Activated CD4-positive, alpha-beta T cell treated with anti-CD3 and anti-CD28 coated beads for 36 hours (primary cell): ENCODE measurements at regions of chr12 and their contacts with region 1.

Region 1: GRCh38 chr12:70242695-70243509 is at the start of gene CNOT2:
- DNase-seq: peak; percentile 95
- ATAC-seq: peak; percentile 83
- H3K4me3 Mint-ChIP-seq: peak within 1 kb of the TSS; percentile 94
- H3K27ac Mint-ChIP-seq: peak within 1 kb of the TSS; percentile 100
- H3K4me1 Mint-ChIP-seq: peaks cover 57% of the 10 kb centered on the region
- H3K27me3 Mint-ChIP-seq: no peaks in the 10 kb centered on the region
- total RNA-seq, gene CNOT2: 63.3 to 77.7 TPM

Region 2: DNA sequence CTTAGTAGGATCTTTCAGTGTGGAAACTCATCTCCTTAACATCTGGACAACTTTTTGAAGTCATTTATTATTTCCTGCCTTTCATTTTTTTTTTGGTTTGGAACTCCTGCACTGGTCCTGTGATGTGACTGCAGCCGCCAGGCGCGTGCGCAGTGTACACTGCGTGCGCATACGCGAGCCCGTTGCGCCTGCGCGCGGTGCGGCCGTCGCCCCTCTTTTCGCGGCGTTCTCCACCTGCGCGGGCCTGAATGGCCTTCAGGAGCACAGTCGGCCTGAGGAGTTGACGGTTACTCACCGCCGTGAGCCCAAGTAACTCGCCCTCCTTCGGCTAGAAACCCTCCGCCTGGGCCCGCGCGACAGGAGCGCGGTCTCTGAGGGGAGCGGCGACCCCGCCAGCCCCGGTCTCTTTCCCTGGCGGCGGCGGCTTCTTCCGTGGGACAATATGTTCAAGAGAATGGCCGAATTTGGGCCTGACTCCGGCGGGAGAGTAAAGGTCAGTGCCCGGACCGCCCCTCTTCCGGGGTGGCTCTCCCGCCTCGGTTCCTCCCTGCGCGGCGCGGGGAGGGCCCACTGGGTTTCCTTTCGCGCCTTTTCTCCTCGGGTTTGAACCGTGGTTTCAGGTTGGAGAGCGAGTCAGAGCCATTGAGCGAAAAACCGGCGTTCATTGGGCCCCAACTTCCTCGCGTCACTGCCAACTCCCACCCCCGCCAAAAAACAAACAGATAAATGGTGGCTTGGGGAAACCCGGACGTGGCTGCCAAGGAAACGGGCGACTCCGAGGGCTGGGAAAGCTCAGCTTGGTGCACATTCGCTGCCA is 883.2 kb before region 1 on chr12 and contains the start of gene YEATS4:
- CTCF ChIA-PET with region 1: no interaction called
- POLR2A ChIA-PET with region 1: no interaction called
- intact Hi-C with region 1: loop called in 1 of 2 experiments (anchors 1 kb)
- DNase-seq: peak; percentile 92
- ATAC-seq: peak; percentile 83
- H3K4me3 Mint-ChIP-seq: peak within 1 kb of the TSS; percentile 91
- H3K27ac Mint-ChIP-seq: peak within 1 kb of the TSS; percentile 97
- H3K4me1 Mint-ChIP-seq: peaks cover 29% of the 10 kb centered on the region
- H3K27me3 Mint-ChIP-seq: peaks cover 1% of the 10 kb centered on the region
- total RNA-seq, gene YEATS4: 55.4 to 59.8 TPM

Region 3: DNA sequence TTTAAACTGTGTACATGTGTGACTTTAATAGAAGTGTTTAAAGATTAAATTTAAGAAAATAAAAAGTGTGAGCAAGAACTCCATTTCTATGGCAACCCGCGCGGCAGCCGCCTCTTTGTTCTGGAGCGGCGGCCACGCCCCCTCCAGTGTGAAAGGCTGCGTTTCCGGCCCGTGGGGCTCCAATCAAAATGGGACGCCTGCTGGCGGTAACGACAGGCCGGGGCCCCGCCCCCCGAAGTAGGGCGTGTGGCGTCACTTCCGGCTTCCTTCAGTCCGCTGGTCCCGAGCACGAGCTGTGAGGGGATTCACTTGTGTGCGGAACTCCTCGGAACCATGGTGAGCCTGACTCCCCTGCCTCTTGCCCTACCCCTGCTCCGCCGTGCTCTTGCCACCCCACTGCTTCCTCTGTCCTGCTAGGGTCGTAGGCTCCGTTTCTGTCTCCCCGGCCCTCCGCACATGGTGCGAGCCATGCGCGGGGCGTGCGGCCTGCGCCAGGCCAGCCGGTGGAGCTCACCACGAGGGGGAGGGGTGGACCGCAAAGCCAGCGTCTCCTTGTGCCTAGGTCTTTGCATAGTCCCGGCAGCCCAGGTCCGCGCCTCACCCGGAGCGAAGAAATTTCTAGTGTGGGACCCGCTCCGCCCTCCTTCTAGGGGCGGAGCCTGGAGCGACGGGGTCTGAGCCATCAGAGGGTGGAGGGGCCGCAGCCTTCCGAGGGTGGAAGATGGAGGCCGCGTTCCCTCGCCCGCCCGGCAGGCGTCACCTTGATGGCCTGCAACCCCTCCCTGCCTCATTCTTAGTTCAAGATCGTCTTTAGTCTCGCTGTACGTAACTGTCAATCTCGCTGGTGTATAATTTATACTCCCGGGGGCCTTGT is 657.5 kb before region 1 on chr12 and contains the start of gene CCT2:
- CTCF ChIA-PET with region 1: no interaction called
- POLR2A ChIA-PET with region 1: no interaction called
- intact Hi-C with region 1: loop called (anchors 5 kb)
- DNase-seq: peak; percentile 98
- ATAC-seq: peak; percentile 94
- H3K4me3 Mint-ChIP-seq: peak within 1 kb of the TSS; percentile 96
- H3K27ac Mint-ChIP-seq: peak within 1 kb of the TSS; percentile 95
- H3K4me1 Mint-ChIP-seq: peaks cover 30% of the 10 kb centered on the region
- H3K27me3 Mint-ChIP-seq: no peaks in the 10 kb centered on the region
- total RNA-seq, gene CCT2: 293 to 360 TPM

Region 4: DNA sequence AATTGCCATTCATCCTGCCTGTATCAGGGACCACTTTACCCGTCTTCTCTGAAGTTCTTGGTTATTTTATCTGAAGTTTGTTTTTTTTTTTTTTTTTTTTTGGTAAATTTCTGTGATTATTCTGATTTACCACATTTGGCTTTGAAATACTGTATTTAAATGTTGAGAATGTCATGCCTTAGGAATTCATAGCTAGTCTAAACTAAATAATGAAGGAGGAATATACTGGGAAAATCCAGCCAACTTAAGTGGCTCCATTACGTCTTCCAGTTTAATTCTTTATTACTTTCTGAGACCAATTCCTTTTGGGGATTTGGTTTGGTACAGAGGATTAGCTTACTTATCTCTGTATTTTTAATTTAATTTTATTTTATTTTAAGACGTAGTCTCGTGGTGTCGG is 62.9 kb after region 1 on chr12:
- CTCF ChIA-PET with region 1: no interaction called
- POLR2A ChIA-PET with region 1: no interaction called
- intact Hi-C with region 1: loop called in 1 of 2 experiments (anchors 5 kb)
- DNase-seq: no peak
- ATAC-seq: no peak
- H3K4me3 Mint-ChIP-seq: no peak overlapping the region
- H3K27ac Mint-ChIP-seq: no peak overlapping the region
- H3K4me1 Mint-ChIP-seq: peaks cover 51% of the 10 kb centered on the region
- H3K27me3 Mint-ChIP-seq: no peaks in the 10 kb centered on the region

Region 5: DNA sequence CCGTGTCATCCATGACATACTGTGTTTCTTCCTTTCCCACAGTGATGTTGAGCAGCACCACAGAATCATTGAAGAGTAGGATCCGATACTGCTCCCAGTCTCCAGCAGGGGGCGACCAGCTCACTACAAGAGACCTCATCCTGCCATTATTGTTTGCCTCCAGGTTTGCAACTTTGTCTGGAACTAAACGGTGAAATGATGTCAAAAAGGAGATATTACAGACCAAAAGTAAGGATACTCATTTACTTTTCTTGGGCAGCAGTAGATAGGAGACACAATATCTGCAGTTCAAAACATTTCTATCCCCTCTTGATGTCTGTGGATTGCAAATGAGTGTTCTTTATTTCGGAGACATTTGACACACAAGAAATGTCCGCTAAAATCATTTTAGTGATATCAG is 347.1 kb after region 1 on chr12:
- CTCF ChIA-PET with region 1: no interaction called
- POLR2A ChIA-PET with region 1: no interaction called
- intact Hi-C with region 1: no loop called
- DNase-seq: peak; percentile 80
- ATAC-seq: peak; percentile 74
- H3K4me3 Mint-ChIP-seq: no peak overlapping the region
- H3K27ac Mint-ChIP-seq: no peak overlapping the region
- H3K4me1 Mint-ChIP-seq: no peaks in the 10 kb centered on the region
- H3K27me3 Mint-ChIP-seq: peaks cover 22% of the 10 kb centered on the region

Region 6: GRCh38 chr12:71663561-71664294 is 1420.8 kb after region 1 on chr12 and contains the start of gene ZFC3H1:
- CTCF ChIA-PET with region 1: no interaction called
- POLR2A ChIA-PET with region 1: no interaction called
- intact Hi-C with region 1: loop called (anchors 1 to 5 kb)
- DNase-seq: peak; percentile 93
- ATAC-seq: peak; percentile 87
- H3K4me3 Mint-ChIP-seq: peak within 1 kb of the TSS; percentile 98
- H3K27ac Mint-ChIP-seq: peak within 1 kb of the TSS; percentile 99
- H3K4me1 Mint-ChIP-seq: peaks cover 38% of the 10 kb centered on the region
- H3K27me3 Mint-ChIP-seq: no peaks in the 10 kb centered on the region
- total RNA-seq, gene ZFC3H1: 57.1 to 71.5 TPM

Region 7: GRCh38 chr12:71840231-71840847 is 1597.4 kb after region 1 on chr12:
- CTCF ChIA-PET with region 1: no interaction called
- POLR2A ChIA-PET with region 1: no interaction called
- intact Hi-C with region 1: loop called in 1 of 2 experiments (anchors 5 kb)
- DNase-seq: peak; percentile 16
- ATAC-seq: peak; percentile 28
- H3K4me3 Mint-ChIP-seq: peak overlapping the region; percentile 94
- H3K27ac Mint-ChIP-seq: peak overlapping the region; percentile 95
- H3K4me1 Mint-ChIP-seq: peaks cover 39% of the 10 kb centered on the region
- H3K27me3 Mint-ChIP-seq: no peaks in the 10 kb centered on the region